A549 (cell line): ENCODE measurements at regions of chr1 and their contacts with region 1.

Region 1: DNA sequence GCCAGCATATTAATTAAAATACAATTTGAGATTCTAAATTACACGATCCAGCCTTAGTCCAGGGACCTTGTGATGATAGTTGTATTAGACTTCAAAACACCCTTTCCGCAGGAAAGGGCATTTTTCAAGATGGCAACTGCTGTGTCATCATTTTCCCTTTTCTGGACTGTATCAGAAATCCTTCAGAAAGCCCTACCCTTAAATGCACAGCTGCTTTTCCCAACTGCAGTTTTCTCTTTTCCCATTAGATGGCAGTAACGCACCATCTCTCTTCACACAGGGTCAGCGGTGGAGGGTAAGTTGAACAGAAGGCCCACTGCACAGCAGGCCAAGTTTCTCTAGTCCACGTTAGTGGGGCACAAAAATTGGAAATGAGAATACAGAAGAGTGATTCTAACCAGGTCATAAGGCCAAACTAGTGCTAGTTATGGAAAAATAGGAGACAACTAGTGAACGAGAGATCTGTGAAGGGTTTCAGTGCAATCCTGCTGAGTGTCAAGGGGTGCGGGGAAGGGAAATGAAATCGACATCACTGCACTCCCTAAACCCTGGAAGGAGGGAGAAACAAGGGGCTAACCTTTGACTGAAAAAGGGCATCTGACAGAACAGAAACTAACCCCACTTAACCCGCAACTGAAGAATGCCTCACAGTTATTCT is 22.1 kb upstream of the TDRD10 start:
- DNase-seq: peak; percentile 86 to 93
- ATAC-seq: peak; percentile 95 to 99
- H3K4me3 ChIP-seq: no peak overlapping the region
- H3K27ac ChIP-seq: peak overlapping the region; percentile 48 to 67; a peak in 3 of 6 replicates
- H3K4me1 ChIP-seq: peaks cover 9% of the 10 kb centered on the region; the same call in 2 of the 3 replicates
- CTCF ChIP-seq: peak; percentile 94
- EP300 ChIP-seq: no peak
- POLR2A ChIP-seq: no peak
- RAD21 ChIP-seq: peak; percentile 95 to 97

Region 2: DNA sequence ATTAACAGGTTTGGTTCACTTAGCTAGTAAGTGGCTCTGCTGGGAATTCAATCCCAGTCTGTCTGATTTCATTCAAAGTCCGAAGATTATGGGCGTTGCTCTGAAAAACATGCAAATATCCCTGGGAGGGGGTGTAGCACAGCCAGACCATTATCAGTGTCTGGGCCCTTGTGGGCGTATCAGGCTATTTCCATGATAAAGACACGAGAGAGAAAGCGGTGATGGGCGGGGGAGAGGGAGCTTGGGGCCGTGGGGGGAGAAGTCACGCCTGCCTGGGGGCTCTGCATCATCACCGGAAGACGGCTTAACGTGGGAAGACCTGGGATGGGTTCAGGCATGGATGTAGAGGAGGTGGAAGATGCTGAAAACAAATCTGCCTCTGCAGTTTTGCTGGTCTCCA is 49.0 kb before region 1 on chr1:
- CTCF ChIA-PET with region 1: interaction called, 13 read pairs
- POLR2A ChIA-PET with region 1: no interaction called
- DNase-seq: no peak
- ATAC-seq: no peak
- H3K4me3 ChIP-seq: no peak overlapping the region
- H3K27ac ChIP-seq: no peak overlapping the region
- H3K4me1 ChIP-seq: peaks cover 33% of the 10 kb centered on the region
- CTCF ChIP-seq: no peak
- EP300 ChIP-seq: no peak
- POLR2A ChIP-seq: no peak
- RAD21 ChIP-seq: no peak

Region 3: GRCh38 chr1:154533952-154534844 is 54.3 kb after region 1 on chr1:
- CTCF ChIA-PET with region 1: interaction called, 29 read pairs
- POLR2A ChIA-PET with region 1: no interaction called
- DNase-seq: peak; percentile 77
- ATAC-seq: peak; percentile 86 to 89
- H3K4me3 ChIP-seq: no peak overlapping the region
- H3K27ac ChIP-seq: no peak overlapping the region
- H3K4me1 ChIP-seq: no peaks in the 10 kb centered on the region
- CTCF ChIP-seq: peak; percentile 76
- EP300 ChIP-seq: no peak
- POLR2A ChIP-seq: no peak
- RAD21 ChIP-seq: peak; percentile 69 to 72

Region 4: GRCh38 chr1:154546264-154547063 is 66.6 kb after region 1 on chr1:
- CTCF ChIA-PET with region 1: interaction called, 79 read pairs
- POLR2A ChIA-PET with region 1: interaction called, 3 read pairs
- DNase-seq: peak; percentile 81 to 90
- ATAC-seq: peak; percentile 91 to 95
- H3K4me3 ChIP-seq: no peak overlapping the region
- H3K27ac ChIP-seq: no peak overlapping the region
- H3K4me1 ChIP-seq: peaks cover 21% of the 10 kb centered on the region
- CTCF ChIP-seq: peak; percentile 79
- EP300 ChIP-seq: no peak
- POLR2A ChIP-seq: no peak
- RAD21 ChIP-seq: peak; percentile 85 to 88

Region 5: GRCh38 chr1:154884869-154885701 is 405.2 kb after region 1 on chr1:
- CTCF ChIA-PET with region 1: interaction called, 22 read pairs
- POLR2A ChIA-PET with region 1: no interaction called
- DNase-seq: no peak
- ATAC-seq: no peak
- H3K4me3 ChIP-seq: no peak overlapping the region
- H3K27ac ChIP-seq: no peak overlapping the region
- H3K4me1 ChIP-seq: peaks cover 4% of the 10 kb centered on the region; the same call in 1 of the 3 replicates
- CTCF ChIP-seq: no peak
- EP300 ChIP-seq: no peak
- POLR2A ChIP-seq: no peak
- RAD21 ChIP-seq: no peak